Adrenal gland (tissue), 19 donors: ENCODE measurements at regions of chr16 and their contacts with region 1.

Region 1: GRCh38 chr16:72952811-72953595 is 94.9 kb downstream of the ZFHX3 start:
- DNase-seq: peak in 4 of 7 donors; percentile 53 to 74 (median 56)
- H3K4me3 ChIP-seq: peak overlapping the region in 1 of 4 donors; percentile 0
- H3K27ac ChIP-seq: peak overlapping the region in 4 of 5 donors; percentile 3 to 86 (median 66)
- H3K4me1 ChIP-seq: peaks cover 20 to 25% of the 10 kb centered on the region in 2 donors
- H3K27me3 ChIP-seq: no peaks in the 10 kb centered on the region
- CTCF ChIP-seq: no peak
- POLR2A ChIP-seq: peak in 1 of 2 donors; percentile 39

Region 2: GRCh38 chr16:72847187-72848027 is 105.6 kb before region 1 on chr16:
- intact Hi-C with region 1: loop called in 1 of 2 experiments (anchors 10 kb)
- DNase-seq: peak in 4 of 7 donors; percentile 30 to 72 (median 54)
- H3K4me3 ChIP-seq: no peak overlapping the region
- H3K27ac ChIP-seq: peak overlapping the region in 3 of 5 donors; percentile 90 to 94 (median 92)
- H3K4me1 ChIP-seq: peaks cover 15 to 47% of the 10 kb centered on the region in 2 donors
- H3K27me3 ChIP-seq: no peaks in the 10 kb centered on the region
- CTCF ChIP-seq: peak in 4 of 6 experiments; percentile 34 to 41 (median 36)
- POLR2A ChIP-seq: no peak